Activated T-helper 2 cell treated with anti-CD3 and anti-CD28 coated beads, Interferon-gamma antibody, Interleukin-2, Interleukin-4, amounts not matched to agents 10 μg/mL and 5 μg/mL and 100 μg/mL, durations not matched to agents 14 hours and 24 hours and 36 hours (primary cell): ENCODE measurements at regions of chr19 and their contacts with region 1.

Region 1: GRCh38 chr19:30006207-30006606 is 64.2 kb downstream of the URI1 start:
- DNase-seq: no peak
- H3K4me3 Mint-ChIP-seq: peak overlapping the region; percentile 77
- H3K27ac Mint-ChIP-seq: peak overlapping the region; percentile 88
- H3K4me1 Mint-ChIP-seq: peaks cover 49% of the 10 kb centered on the region
- H3K27me3 Mint-ChIP-seq: no peaks in the 10 kb centered on the region

Region 2: DNA sequence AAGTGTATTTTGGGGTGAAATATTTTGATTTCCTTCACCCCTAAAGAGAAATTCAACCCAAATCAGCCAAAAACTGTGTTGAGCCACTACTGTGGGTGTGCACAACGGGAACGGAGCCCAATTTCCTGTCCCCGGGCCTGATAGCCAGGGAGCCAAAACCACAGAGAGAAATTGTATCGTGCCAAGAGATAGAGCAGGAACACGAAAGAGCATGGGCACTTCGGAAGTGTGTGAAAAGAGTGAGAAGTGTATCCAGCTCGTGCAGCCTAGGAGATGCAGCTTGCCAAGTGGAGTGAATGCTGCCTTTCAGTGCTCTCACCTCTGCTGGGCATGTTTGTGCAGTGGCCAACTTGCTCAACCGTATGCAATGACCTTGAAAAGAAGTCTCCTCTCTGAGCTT is 360.3 kb before region 1 on chr19:
- intact Hi-C with region 1: no loop called
- DNase-seq: no peak
- H3K4me3 Mint-ChIP-seq: no peak overlapping the region
- H3K27ac Mint-ChIP-seq: peak overlapping the region; percentile 18
- H3K4me1 Mint-ChIP-seq: peaks cover 19% of the 10 kb centered on the region
- H3K27me3 Mint-ChIP-seq: peaks cover 11% of the 10 kb centered on the region

Region 3: DNA sequence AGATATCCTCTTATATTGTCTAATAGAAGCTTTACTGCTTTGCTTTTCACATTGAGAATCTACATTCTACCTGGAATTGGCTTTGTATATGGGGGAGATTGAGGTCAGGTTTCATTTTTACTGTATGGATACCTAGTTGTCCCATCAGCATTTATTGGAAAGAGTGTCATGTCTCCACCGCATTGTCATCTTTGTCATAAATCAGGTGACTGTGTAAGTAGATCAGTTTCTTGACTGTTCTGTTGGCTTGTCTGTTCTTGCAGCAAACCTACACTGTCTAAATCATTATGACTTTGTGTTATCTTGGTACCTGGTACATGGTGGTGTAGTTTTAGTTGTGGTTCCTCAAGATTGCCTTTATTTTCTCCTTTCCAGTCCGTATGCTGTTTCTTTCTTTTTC is 58.3 kb before region 1 on chr19:
- intact Hi-C with region 1: loop called (anchors 2 kb)
- DNase-seq: no peak
- H3K4me3 Mint-ChIP-seq: peak overlapping the region; percentile 0
- H3K27ac Mint-ChIP-seq: peak overlapping the region; percentile 88
- H3K4me1 Mint-ChIP-seq: peaks cover 58% of the 10 kb centered on the region
- H3K27me3 Mint-ChIP-seq: no peaks in the 10 kb centered on the region

Region 4: GRCh38 chr19:29964171-29964570 is 42.0 kb before region 1 on chr19:
- intact Hi-C with region 1: loop called (anchors 5 kb)
- DNase-seq: no peak
- H3K4me3 Mint-ChIP-seq: no peak overlapping the region
- H3K27ac Mint-ChIP-seq: no peak overlapping the region
- H3K4me1 Mint-ChIP-seq: peaks cover 50% of the 10 kb centered on the region
- H3K27me3 Mint-ChIP-seq: no peaks in the 10 kb centered on the region

Region 5: DNA sequence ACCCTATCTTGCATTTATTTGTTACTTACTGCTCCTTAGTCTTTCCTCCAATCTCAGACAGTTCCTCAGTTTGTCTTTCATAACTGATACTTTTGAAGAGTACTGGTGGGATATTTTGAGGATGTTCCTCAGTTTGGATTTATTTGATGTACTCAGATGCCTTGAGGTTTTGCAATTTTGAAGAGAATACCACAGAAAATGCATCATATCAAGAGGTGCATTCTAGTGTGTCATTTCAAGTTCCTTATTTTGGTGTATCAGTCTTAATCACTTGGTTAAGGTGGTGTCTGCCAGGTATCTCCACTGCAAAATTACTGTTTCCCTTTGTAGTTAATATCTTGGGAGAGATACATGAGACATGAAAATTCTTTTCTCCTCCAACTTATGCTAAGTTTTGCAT is 11.0 kb after region 1 on chr19:
- intact Hi-C with region 1: no loop called
- DNase-seq: no peak
- H3K4me3 Mint-ChIP-seq: no peak overlapping the region
- H3K27ac Mint-ChIP-seq: no peak overlapping the region
- H3K4me1 Mint-ChIP-seq: peaks cover 6% of the 10 kb centered on the region
- H3K27me3 Mint-ChIP-seq: no peaks in the 10 kb centered on the region